ENCODE measurements at regions of chr2 and their contacts with region 1.

Region 1: GRCh38 chr2:150528861-150529801 is 41.7 kb upstream of the RND3 start:
- DNase-seq: peak; percentile 45
- ATAC-seq: peak; percentile 96
- H3K4me3 ChIP-seq: no peak overlapping the region
- H3K27ac ChIP-seq: no peak overlapping the region
- H3K4me1 ChIP-seq: no peaks in the 10 kb centered on the region; the same call in 1 of the 2 replicates
- H3K27me3 ChIP-seq: no peaks in the 10 kb centered on the region
- CTCF ChIP-seq: no peak
- EP300 ChIP-seq: no peak; a peak in 1 of 4 replicates
- POLR2A ChIP-seq: no peak
- RAD21 ChIP-seq: no peak

Region 2: DNA sequence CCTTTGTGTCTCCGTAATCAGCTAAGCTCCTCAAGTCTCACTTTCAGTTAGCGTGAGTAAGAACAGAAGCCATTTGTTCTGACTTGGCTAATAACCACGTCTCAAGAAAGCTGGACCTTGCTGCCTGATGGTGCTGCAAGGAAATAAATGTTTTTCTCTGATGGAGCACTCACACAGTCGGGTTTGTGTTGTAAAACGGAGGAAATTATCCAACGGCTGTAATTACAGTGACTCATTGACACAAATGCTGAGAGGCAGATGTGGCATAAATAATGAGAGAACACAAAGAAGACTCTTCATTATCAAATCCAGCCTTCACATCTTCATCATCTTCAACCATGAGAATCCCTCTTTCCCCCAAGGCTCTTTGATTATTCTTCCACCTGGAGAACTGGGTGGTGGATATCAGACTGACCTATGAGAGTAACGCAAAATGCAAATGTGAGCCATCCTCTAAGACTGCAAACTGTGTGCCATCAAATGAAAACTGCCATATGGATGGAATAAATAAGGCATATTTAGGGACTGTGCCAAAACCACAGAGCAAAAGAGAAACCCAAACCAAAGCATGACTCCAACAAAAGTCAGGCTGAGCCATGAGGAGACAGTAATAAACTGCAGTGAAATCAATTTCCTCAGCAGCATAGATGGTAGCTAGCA is 294.2 kb before region 1 on chr2:
- CTCF ChIA-PET with region 1: no interaction called
- POLR2A ChIA-PET with region 1: no interaction called
- RAD21 ChIA-PET with region 1: no interaction called
- SMC1A ChIA-PET with region 1: no interaction called
- in situ Hi-C with region 1: no loop called
- intact Hi-C with region 1: no loop called
- DNase-seq: no peak
- ATAC-seq: no peak
- H3K4me3 ChIP-seq: no peak overlapping the region
- H3K27ac ChIP-seq: no peak overlapping the region
- H3K4me1 ChIP-seq: no peaks in the 10 kb centered on the region
- H3K27me3 ChIP-seq: no peaks in the 10 kb centered on the region; a peak in 1 of 4 replicates
- CTCF ChIP-seq: no peak
- EP300 ChIP-seq: no peak
- POLR2A ChIP-seq: no peak
- RAD21 ChIP-seq: no peak

Region 3: DNA sequence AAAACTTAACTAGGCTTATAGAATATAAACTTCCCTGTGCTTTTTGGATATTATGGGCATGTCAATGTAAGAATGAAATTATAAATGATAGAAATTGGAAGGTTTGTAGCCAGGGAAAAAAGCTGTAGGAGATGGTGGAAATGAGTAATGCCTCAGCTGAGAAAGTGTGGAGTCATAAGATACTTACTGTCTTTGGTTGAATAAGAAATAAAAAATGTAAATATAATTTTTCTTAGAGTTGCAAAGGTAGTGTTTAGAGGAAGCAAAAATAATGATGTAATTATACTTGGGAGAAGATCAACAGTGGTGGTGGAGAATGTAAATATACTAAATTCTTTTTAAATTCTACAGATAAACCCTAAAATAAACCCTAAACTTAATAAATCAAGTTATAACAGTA is 15.5 kb before region 1 on chr2:
- CTCF ChIA-PET with region 1: interaction called, 9 read pairs
- POLR2A ChIA-PET with region 1: interaction called, 3 read pairs
- RAD21 ChIA-PET with region 1: interaction called, 13 read pairs
- SMC1A ChIA-PET with region 1: interaction called, 26 read pairs
- in situ Hi-C with region 1: no loop called
- intact Hi-C with region 1: no loop called
- DNase-seq: no peak
- ATAC-seq: no peak
- H3K4me3 ChIP-seq: no peak overlapping the region
- H3K27ac ChIP-seq: no peak overlapping the region
- H3K4me1 ChIP-seq: no peaks in the 10 kb centered on the region
- H3K27me3 ChIP-seq: no peaks in the 10 kb centered on the region
- CTCF ChIP-seq: no peak
- EP300 ChIP-seq: no peak
- POLR2A ChIP-seq: no peak
- RAD21 ChIP-seq: no peak

Region 4: DNA sequence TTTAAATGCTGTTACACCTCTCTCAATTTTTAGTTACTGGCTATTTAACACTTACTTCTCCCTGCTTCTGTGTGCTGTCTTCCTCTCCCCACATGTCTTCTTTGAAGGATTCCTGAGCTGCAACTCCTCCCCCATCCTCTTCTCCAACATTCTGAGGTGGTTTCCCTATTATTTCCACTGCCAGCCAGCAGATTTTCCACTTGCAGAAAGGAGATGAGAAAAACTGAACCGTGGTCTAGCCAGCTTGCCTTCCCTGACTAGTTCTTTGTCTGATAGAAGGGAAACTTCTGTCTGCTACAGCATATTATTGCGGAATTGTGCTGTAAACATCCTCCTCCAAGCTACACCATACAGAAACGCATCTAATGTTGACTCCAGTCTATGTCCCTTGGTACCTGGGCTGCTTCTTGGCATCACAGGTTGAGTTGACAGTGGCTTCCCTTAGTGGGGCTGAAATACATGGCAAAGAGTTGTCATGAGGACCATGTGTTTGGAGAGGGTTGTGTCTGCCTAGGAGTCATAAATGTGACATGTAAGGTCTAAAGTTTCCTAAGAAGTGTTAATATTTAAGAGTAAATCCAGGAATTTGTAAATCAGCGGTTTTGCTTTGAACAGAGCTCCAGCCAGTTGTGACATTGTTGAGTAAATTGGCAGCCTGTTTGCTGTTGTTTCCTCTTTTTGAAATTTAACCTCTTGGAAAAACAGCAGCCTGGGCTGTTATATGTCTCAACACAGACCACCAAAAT is 26.7 kb after region 1 on chr2:
- CTCF ChIA-PET with region 1: interaction called, 6 read pairs
- POLR2A ChIA-PET with region 1: interaction called, 4 read pairs
- RAD21 ChIA-PET with region 1: interaction called, 11 read pairs
- SMC1A ChIA-PET with region 1: interaction called, 64 read pairs
- in situ Hi-C with region 1: no loop called
- intact Hi-C with region 1: no loop called
- DNase-seq: no peak
- ATAC-seq: peak; percentile 63
- H3K4me3 ChIP-seq: no peak overlapping the region
- H3K27ac ChIP-seq: no peak overlapping the region
- H3K4me1 ChIP-seq: no peaks in the 10 kb centered on the region
- H3K27me3 ChIP-seq: no peaks in the 10 kb centered on the region
- CTCF ChIP-seq: no peak
- EP300 ChIP-seq: no peak
- POLR2A ChIP-seq: no peak
- RAD21 ChIP-seq: no peak

Region 5: DNA sequence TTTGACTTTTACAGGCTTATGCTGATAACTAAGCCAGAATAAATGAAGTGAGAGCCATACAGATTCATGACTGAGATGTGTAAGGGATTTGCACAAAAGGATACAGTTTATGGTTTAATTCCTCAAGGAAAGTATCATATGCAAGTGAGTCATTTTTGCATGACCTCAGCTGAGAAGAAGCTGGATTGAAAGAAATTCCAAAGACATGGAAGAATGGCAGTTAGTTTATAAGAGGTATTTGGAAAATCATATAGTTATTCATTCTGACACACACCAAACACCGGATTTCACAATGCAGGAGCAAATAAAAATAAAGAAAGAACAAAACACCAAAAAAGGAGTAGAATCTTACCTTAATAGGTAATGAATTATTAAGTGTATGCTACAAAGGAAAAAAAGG is 41.6 kb after region 1 on chr2:
- CTCF ChIA-PET with region 1: interaction called, 6 read pairs
- POLR2A ChIA-PET with region 1: interaction called, 10 read pairs
- RAD21 ChIA-PET with region 1: interaction called, 46 read pairs
- SMC1A ChIA-PET with region 1: interaction called, 123 read pairs
- in situ Hi-C with region 1: no loop called
- intact Hi-C with region 1: no loop called
- DNase-seq: no peak
- ATAC-seq: no peak
- H3K4me3 ChIP-seq: no peak overlapping the region
- H3K27ac ChIP-seq: no peak overlapping the region
- H3K4me1 ChIP-seq: peaks cover 3% of the 10 kb centered on the region; the same call in 1 of the 2 replicates
- H3K27me3 ChIP-seq: no peaks in the 10 kb centered on the region
- CTCF ChIP-seq: no peak
- EP300 ChIP-seq: no peak
- POLR2A ChIP-seq: no peak
- RAD21 ChIP-seq: no peak

Region 6: GRCh38 chr2:150610671-150611279 is 81.6 kb after region 1 on chr2:
- CTCF ChIA-PET with region 1: interaction called, 9 read pairs
- POLR2A ChIA-PET with region 1: no interaction called
- RAD21 ChIA-PET with region 1: interaction called, 16 read pairs
- SMC1A ChIA-PET with region 1: interaction called, 17 read pairs
- in situ Hi-C with region 1: no loop called
- intact Hi-C with region 1: no loop called
- DNase-seq: no peak
- ATAC-seq: peak; percentile 85
- H3K4me3 ChIP-seq: no peak overlapping the region
- H3K27ac ChIP-seq: no peak overlapping the region
- H3K4me1 ChIP-seq: no peaks in the 10 kb centered on the region
- H3K27me3 ChIP-seq: no peaks in the 10 kb centered on the region; a peak in 1 of 4 replicates
- CTCF ChIP-seq: peak; percentile 30 to 52 (median 46); a peak in 4 of 6 replicates
- EP300 ChIP-seq: no peak
- POLR2A ChIP-seq: no peak
- RAD21 ChIP-seq: peak; percentile 55